ENCODE measurements at regions of chr1 and their contacts with region 1.

Region 1: DNA sequence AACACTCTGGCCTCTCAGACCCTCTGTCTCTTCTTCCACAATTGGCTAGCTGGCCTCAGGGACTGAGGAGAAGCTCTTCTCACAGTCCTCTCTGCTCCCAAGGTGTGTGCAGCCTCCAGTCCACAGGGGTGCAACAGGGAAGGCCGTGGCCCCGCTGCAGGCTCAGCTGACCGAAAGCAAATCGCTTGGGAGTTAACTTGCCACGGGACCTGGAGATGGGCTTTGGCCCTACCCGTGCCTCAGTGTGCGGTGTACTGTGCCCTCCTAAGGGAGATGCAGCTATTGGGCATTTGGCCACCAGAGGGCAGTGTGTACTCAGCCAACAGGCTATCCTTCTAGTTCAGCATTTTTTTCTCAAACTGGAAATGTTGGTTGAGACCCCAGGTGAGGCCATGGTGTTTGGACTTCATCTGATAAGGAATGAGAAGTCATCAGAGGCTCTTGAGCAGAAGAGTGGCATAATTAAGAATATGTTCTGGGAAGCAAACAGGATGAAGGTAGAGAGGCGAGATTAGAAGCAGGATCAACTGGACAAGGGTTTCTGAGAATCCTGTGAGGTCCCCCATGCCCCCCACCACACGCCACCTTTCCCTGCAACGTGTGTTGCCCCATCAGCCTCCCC is 42.5 kb upstream of the TMEM125 start:
- DNase-seq: peak; percentile 88
- H3K4me3 Mint-ChIP-seq: no peak overlapping the region
- H3K27ac Mint-ChIP-seq: no peak overlapping the region
- H3K4me1 Mint-ChIP-seq: no peaks in the 10 kb centered on the region
- H3K27me3 Mint-ChIP-seq: peaks cover 1% of the 10 kb centered on the region

Region 2: DNA sequence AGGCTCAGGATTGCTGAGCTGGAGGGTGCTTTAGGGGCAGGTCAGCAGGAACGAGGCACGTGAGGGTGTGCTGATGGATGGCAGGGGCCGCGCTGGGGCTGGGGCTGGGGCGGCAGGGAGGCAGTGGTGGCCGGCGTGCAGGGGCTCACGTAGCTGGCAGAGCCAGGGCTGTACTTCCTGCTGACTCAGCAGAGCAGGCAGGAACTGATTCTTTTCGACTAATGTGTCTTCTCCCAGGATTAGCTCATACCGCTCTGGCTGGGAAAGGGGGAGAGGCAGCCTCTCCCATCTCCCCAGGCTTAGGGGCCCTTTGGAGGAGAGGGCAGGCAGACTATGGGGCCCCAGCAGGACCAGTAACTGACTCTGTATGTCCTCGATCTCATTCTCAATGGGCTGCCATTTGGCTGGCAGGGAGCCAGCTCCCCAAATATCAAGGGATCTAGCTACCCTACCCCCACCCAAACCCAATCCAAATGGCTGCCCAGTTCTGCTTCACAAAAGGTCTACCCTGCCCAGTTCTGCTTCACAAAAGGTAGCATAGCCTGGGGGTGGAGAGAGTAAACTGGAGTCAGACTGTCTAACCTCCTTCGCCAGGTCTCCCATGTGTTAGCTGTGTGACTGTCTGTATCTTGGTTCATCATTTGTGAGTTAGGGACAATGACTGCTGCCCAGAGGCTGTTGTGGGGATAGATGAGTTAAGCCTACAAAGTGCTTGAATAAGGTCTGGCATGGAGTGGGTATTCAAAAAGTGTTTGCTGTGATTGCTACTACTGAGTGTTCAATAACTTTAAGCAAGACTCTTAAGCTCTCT is 168.5 kb before region 1 on chr1:
- CTCF ChIA-PET with region 1: no interaction called
- POLR2A ChIA-PET with region 1: no interaction called
- intact Hi-C with region 1: no loop called
- DNase-seq: peak; percentile 35
- H3K4me3 Mint-ChIP-seq: no peak overlapping the region
- H3K27ac Mint-ChIP-seq: no peak overlapping the region
- H3K4me1 Mint-ChIP-seq: peaks cover 13% of the 10 kb centered on the region
- H3K27me3 Mint-ChIP-seq: peaks cover 3% of the 10 kb centered on the region

Region 3: DNA sequence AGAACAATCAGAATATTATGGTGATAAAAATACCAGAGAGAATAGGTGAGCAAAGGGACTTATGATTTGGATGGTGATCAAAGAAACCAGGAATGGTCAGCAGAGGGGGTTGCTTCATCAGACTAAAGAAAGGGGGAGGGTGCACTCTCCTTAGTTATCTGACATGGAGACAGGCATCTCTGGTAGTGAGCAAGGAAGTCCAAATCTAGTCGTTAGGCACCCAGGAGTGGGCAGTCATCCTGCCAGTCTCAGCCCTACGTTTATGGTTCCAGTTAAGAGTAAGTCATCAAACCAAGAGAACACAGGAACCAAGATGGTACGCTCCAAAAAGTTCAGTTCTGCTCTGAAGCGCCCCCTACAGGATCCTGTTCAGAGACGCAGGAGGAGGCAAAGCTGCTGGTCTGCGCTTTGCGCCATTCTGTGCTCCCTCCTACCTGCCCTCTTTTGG is 83.8 kb before region 1 on chr1:
- CTCF ChIA-PET with region 1: no interaction called
- POLR2A ChIA-PET with region 1: no interaction called
- intact Hi-C with region 1: no loop called
- DNase-seq: peak; percentile 28
- H3K4me3 Mint-ChIP-seq: no peak overlapping the region
- H3K27ac Mint-ChIP-seq: no peak overlapping the region
- H3K4me1 Mint-ChIP-seq: peaks cover 2% of the 10 kb centered on the region
- H3K27me3 Mint-ChIP-seq: peaks cover 50% of the 10 kb centered on the region

Region 4: DNA sequence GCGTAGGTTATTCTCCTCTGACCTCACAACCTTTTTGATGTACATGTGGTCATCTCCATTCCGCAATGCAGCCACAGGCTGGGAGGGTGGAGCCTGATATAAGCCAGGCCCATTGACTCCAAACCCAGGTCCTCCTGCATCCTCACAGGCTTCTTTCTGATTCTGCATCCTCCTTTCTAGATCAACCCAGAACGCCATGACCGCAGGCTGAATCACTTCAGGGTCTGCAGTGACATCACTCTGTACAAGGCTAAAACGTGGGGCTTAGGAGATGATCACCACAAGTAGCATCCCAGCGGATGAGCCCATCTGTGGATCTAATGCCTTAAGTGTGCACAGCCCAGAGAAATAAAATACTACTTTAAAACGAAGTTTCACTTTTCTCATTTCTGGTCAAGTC is 71.2 kb before region 1 on chr1:
- CTCF ChIA-PET with region 1: no interaction called
- POLR2A ChIA-PET with region 1: no interaction called
- intact Hi-C with region 1: no loop called
- DNase-seq: no peak
- H3K4me3 Mint-ChIP-seq: no peak overlapping the region
- H3K27ac Mint-ChIP-seq: no peak overlapping the region
- H3K4me1 Mint-ChIP-seq: no peaks in the 10 kb centered on the region
- H3K27me3 Mint-ChIP-seq: peaks cover 3% of the 10 kb centered on the region

Region 5: GRCh38 chr1:43238085-43238484 is 10.8 kb after region 1 on chr1:
- CTCF ChIA-PET with region 1: interaction called, 16 read pairs
- POLR2A ChIA-PET with region 1: no interaction called
- intact Hi-C with region 1: no loop called
- DNase-seq: peak; percentile 53
- H3K4me3 Mint-ChIP-seq: no peak overlapping the region
- H3K27ac Mint-ChIP-seq: no peak overlapping the region
- H3K4me1 Mint-ChIP-seq: no peaks in the 10 kb centered on the region
- H3K27me3 Mint-ChIP-seq: peaks cover 1% of the 10 kb centered on the region

Region 6: GRCh38 chr1:43274125-43274803 is 47.0 kb after region 1 on chr1:
- CTCF ChIA-PET with region 1: no interaction called
- POLR2A ChIA-PET with region 1: no interaction called
- intact Hi-C with region 1: no loop called
- DNase-seq: peak; percentile 63
- H3K4me3 Mint-ChIP-seq: no peak overlapping the region
- H3K27ac Mint-ChIP-seq: peak overlapping the region; percentile 75
- H3K4me1 Mint-ChIP-seq: peaks cover 20% of the 10 kb centered on the region
- H3K27me3 Mint-ChIP-seq: peaks cover 5% of the 10 kb centered on the region

Region 7: DNA sequence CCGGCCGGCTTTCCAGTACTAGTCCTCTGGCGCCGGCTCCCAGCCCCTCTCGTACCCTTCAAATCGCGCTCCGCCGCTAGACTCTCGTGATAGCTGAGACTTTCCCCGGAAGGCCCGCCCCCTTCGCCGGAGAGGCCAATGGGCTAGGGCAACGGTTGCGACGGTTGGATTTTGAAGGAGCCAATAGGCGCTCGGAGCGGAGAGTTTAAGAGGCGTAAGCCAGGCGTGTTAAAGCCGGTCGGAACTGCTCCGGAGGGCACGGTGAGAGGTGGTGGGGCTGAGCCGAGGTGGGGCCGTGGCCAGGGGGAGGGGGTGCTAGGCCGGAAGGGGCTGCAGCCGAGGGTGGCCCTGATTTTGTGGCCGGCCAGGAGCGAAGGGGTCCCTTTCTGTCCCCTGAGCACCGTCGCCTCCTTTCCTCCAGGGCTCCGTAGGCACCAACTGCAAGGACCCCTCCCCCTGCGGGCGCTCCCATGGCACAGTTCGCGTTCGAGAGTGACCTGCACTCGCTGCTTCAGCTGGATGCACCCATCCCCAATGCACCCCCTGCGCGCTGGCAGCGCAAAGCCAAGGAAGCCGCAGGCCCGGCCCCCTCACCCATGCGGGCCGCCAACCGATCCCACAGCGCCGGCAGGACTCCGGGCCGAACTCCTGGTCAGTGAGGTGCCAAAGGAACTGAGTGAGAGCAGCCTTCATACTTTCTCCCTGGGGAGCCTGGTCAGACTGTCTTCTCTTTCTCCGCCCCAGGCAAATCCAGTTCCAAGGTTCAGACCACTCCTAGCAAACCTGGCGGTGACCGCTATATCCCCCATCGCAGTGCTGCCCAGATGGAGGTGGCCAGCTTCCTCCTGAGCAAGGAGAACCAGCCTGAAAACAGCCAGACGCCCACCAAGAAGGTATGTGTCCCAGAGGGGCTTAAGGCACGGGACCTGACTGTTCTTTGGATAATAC is 131.8 kb after region 1 on chr1 and contains the start of gene CDC20:
- CTCF ChIA-PET with region 1: interaction called, 14 read pairs
- POLR2A ChIA-PET with region 1: no interaction called
- intact Hi-C with region 1: loop called (anchors 1 kb)
- DNase-seq: peak; percentile 100
- H3K4me3 Mint-ChIP-seq: peak within 1 kb of the TSS; percentile 84
- H3K27ac Mint-ChIP-seq: peak within 1 kb of the TSS; percentile 74
- H3K4me1 Mint-ChIP-seq: peaks cover 28% of the 10 kb centered on the region
- H3K27me3 Mint-ChIP-seq: no peaks in the 10 kb centered on the region
- total RNA-seq, gene CDC20: 152 to 155 TPM

Region 8: DNA sequence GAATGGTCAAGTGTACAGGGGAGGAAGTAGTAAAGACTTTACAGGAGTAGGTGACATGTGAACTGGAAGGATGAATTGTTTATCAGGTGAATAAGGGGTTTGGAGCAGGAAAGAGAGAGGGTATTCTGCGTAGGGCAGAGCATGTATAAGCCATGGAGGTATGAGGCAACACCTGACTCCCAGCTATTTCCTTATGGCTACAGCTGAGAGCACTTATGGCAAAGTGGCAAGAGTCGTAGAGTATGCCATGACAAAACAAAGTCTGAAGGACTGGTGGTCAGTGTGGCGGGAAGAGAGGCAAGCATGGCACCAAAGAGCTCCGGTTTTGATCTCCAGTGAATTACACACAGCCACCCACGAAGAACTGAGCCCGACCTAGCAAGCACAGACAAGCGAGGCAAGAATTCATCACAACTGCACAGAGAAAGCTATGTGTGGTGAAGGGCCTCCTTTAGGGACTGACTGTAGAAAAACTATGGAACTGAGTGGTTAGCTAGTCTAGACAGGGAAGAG is 149.5 kb after region 1 on chr1:
- CTCF ChIA-PET with region 1: interaction called, 11 read pairs
- POLR2A ChIA-PET with region 1: interaction called, 3 read pairs
- intact Hi-C with region 1: no loop called
- DNase-seq: no peak
- H3K4me3 Mint-ChIP-seq: no peak overlapping the region
- H3K27ac Mint-ChIP-seq: no peak overlapping the region
- H3K4me1 Mint-ChIP-seq: no peaks in the 10 kb centered on the region
- H3K27me3 Mint-ChIP-seq: no peaks in the 10 kb centered on the region

Region 9: DNA sequence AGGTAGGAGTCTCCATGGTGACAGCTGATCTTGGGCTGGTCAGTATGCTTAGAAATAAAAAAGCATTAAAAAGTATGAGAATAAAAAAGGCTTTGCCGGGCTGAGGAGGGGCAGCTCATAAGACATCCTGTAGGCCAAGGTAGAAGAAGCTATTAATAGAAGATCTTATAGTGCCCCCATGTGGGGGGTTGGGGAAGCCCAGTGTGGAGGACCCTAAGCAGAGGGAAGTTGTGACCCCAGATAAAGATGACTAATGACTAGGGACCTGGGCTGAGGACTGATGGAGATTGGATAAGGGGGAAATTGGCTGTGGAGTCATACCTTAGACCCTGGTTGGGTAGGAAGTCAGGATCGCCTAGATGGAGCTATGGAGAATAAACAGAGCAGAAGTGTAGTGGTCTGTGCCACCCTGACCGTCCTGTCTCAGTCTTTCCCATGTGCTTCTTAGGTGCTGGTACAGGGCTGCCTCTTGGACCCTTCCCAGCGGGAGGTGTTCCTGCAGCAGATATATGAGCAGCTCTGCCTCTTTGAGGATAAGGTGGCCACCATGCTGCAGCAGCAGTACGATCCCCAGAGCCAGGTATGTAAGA is 187.5 kb after region 1 on chr1:
- CTCF ChIA-PET with region 1: interaction called, 152 read pairs
- POLR2A ChIA-PET with region 1: interaction called, 4 read pairs
- intact Hi-C with region 1: loop called (anchors 1 kb)
- DNase-seq: peak; percentile 65
- H3K4me3 Mint-ChIP-seq: no peak overlapping the region
- H3K27ac Mint-ChIP-seq: no peak overlapping the region
- H3K4me1 Mint-ChIP-seq: no peaks in the 10 kb centered on the region
- H3K27me3 Mint-ChIP-seq: no peaks in the 10 kb centered on the region

Measured in activated CD4-positive, alpha-beta memory T cell treated with anti-CD3 and anti-CD28 coated beads for 36 hours (primary cell).